Cardiac septum (tissue), 1 donor: ENCODE measurements at regions of chr16 and their contacts with region 1.

Region 1: DNA sequence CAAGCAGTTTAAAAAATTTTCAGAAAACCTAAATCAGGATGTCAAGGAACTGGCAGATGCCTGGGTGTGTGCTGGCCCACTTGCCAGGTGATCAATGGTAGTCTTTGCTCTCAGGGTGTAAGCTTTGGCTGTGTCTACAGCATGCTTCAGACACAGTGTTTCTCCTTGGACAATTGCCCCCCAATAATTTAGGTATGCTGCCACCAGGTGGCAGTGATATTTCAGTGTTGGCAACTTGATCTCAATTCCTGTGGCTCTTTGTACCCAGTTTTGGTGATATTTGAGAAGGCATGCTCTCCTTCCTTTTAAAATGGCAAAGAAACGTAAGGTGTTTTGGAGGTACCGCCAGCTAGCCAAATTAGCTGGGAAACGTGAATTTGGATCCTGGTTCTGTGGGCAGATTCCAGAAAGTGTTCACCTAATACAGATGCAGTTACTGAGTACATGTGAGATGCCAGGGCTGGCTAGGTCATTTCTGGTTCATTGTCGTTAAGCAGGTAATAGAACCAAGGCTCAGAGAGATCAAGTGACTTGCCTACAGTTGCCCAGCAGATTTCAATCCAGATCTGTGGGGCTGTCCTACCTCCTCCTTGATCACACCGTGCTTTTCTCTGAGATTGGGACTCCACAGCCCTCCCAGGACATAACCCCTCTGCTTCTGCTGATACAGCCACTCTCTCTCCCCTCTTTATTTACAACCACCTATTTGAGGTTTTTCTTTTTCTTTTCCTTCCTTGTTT is 155.6 kb upstream of the PLCG2 start:
- DNase-seq: no peak

Region 2: DNA sequence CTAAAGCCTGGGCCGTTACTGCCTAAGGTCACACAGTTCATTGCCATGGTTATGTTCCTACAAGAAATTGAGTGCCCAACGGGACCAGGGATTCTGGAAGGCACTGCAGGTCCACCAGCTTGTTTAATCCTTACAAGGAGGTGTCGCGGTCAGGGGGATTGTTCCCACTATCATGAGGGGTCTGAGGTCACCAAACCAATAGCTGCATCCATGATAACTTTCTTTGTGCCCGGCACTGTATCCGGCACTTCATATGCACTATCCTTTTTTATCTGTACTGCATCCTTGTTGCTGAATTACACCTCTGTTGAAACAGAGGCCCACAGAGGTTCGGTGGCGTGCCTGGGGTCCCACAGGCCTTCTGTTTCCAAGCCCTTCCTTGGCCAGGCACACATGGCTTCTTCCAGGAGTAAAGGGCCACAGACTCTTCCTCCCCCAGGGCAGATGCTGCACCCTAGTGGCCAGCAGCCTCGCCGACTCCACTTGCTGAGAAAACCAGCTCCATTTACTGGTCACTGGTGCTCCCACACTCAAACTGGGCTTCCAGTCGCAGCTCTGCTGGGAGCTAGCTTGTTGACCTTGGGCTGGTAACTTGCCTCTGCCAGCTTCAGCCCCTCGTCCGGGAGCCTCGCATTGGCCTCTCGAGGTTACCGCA is 73.6 kb after region 1 on chr16:
- intact Hi-C with region 1: loop called (anchors 5 kb)
- DNase-seq: no peak

Region 3: DNA sequence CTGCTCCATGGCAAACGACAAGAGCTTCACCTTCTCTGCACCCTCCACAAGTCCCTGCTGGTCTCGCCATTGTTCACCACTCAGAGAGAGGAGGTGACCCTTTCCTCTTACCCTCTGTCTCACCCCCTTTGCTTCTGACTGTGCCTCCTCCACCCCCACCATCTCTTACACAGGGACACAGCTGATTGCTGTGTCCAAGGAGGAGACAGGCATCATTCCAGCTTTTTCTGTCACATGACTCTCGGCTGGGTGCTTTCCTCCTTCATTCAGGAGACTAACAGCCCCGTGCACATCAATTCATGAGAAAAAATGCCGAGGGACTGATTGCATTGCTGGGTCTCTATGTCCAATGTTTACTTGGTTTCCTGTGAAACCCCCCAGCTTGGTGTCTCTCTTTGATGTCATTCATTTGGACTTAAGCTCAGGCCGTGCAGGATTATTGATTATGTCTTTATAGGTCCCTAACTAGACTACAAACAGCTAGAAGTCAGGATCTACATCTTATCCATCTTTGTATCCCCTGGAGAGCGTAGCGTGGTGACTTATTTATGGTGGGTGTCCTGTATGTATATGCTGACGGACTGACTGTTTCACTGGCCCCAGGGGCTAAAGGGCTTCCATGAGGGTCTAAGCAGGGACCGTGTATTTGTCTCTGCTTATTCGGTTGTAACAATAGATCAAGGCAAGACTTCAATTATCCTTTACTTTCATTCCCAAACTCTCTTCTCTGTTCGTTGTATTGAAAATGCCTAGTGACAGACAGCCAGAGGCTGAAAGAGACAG is 921.0 kb after region 1 on chr16:
- intact Hi-C with region 1: no loop called
- DNase-seq: no peak